GM18951 (cell line): ENCODE measurements at regions of chr3 and their contacts with region 1.

Region 1: GRCh38 chr3:194315088-194315964 is 35.8 kb downstream of the CPN2 start:
- POLR2A ChIP-seq: no peak

Region 2: DNA sequence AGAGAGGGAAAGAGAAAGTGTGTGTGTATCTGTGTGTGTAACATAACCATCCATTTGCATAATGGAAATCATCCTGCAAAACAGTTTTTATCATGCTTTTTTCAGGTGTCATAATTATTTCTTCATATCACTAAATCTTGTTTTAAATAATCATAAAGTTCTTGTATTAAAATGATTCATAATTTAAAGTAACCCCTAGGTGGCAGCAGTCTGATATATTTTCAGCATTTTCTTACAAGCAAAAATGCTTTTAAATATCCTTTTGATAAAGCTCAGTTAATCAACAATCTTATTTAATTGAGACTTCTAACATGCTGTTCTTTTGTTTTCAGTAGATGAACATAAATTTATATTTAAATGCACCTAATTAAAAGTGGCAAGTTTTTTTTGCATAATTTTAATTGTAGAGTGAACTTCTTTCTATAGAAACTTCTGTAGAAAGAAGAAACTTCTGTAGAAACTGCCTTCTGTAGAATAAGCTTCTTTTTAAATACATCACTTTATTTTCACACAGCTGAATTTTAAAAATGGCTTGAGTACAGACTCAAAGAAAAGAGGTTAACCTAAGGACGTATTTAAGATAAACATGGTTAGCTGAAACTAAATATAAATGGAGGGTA is 649.8 kb before region 1 on chr3:
- in situ Hi-C with region 1: loop called (anchors 10 kb)
- POLR2A ChIP-seq: no peak

Region 3: GRCh38 chr3:193780810-193781472 is 534.4 kb before region 1 on chr3:
- in situ Hi-C with region 1: loop called (anchors 5 kb)
- POLR2A ChIP-seq: no peak

Region 4: DNA sequence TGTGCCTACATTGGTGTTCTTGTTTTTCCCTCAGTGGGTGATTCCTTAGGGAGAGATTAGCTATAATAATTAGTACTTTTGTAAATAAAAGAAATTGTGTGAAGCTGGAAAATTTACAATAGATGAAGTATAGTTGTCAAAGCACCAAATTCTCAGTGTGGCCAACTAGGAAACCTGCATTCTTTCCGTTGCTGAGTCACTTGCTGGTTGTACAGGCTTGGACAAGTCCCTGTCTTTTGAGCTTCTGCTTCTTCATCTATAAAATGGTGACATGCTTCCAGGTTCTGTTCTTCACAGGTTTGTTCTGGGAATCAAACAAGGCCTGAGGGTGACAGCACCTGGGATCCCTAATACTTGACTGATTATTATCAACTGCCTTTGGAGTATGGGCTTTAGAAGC is 363.5 kb before region 1 on chr3:
- in situ Hi-C with region 1: no loop called
- POLR2A ChIP-seq: no peak

Region 5: GRCh38 chr3:194134757-194135528 is 180.4 kb before region 1 on chr3:
- in situ Hi-C with region 1: loop called (anchors 10 kb)
- POLR2A ChIP-seq: peak; percentile 31